ENCODE measurements at regions of chr11 and their contacts with region 1.

Region 1: DNA sequence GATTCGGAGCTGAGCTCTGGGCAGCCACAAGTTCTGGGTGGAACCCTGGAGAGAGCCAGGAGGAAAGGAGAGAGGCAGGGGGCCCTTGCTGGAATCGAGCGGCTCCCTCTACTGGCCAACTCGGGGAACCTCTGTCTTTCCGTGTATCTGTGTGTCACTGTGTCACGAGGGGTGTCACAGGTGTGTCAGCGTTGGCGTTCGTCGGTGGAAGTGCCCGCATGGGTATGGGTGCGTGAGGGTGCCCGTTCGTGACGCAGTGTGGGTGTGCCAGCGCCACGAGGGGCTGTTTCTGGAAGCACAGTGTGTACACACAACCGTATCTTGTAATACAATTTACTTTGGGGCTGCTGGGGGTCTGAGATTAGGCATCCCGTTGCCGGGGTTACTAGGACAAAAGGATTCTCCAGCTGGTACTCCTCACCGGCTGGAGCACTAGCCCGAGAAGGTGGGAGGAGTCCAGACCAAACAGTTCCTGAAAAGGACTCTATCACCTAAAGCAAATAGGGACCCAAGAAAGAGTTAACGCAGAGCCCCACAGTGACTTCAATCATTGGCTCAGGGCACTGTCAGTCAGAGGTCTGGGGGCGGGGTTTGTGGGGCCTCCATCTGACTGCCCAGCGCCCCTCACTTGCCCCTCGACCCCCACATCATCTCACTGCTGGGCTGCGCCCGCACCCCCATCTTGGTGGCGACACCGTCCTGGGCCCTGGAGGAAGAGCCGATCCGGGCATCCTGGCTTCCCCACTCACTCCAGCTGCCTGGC is 2.6 kb upstream of the BCL9L start:
- DNase-seq: peak; percentile 87
- ATAC-seq: peak; percentile 77
- H3K4me3 ChIP-seq: peak overlapping the region; percentile 71 to 89 (median 81)
- H3K27ac ChIP-seq: peak overlapping the region; percentile 50
- H3K4me1 ChIP-seq: peaks cover 58% of the 10 kb centered on the region
- H3K27me3 ChIP-seq: peaks cover 2 to 7% of the 10 kb centered on the region in 2 experiments; a peak in 3 of 5 replicates
- CTCF ChIP-seq: peak; percentile 94
- EP300 ChIP-seq: no peak
- POLR2A ChIP-seq: no peak
- RAD21 ChIP-seq: peak; percentile 88

Region 2: GRCh38 chr11:118883368-118884071 is 44.8 kb before region 1 on chr11 and contains the start of gene CXCR5:
- CTCF ChIA-PET with region 1: no interaction called
- POLR2A ChIA-PET with region 1: no interaction called
- in situ Hi-C with region 1: no loop called
- intact Hi-C with region 1: loop called (anchors 1 kb)
- DNase-seq: no peak
- ATAC-seq: no peak
- H3K4me3 ChIP-seq: no peak within 1 kb of the TSS
- H3K27ac ChIP-seq: no peak within 1 kb of the TSS
- H3K4me1 ChIP-seq: peaks cover 45% of the 10 kb centered on the region
- H3K27me3 ChIP-seq: peaks cover 3 to 44% of the 10 kb centered on the region in 2 experiments; a peak in 4 of 5 replicates
- CTCF ChIP-seq: no peak
- EP300 ChIP-seq: no peak
- POLR2A ChIP-seq: no peak
- RAD21 ChIP-seq: no peak
- total RNA-seq, gene CXCR5: not detected in 2 replicates

Region 3: GRCh38 chr11:118956094-118956846 is 28.0 kb after region 1 on chr11 and contains the start of gene UPK2:
- CTCF ChIA-PET with region 1: interaction called, 8 read pairs
- POLR2A ChIA-PET with region 1: no interaction called
- in situ Hi-C with region 1: no loop called
- intact Hi-C with region 1: loop called (anchors 1 kb)
- DNase-seq: peak; percentile 64
- ATAC-seq: peak; percentile 97
- H3K4me3 ChIP-seq: no peak within 1 kb of the TSS
- H3K27ac ChIP-seq: no peak within 1 kb of the TSS
- H3K4me1 ChIP-seq: no peaks in the 10 kb centered on the region
- H3K27me3 ChIP-seq: peaks cover 2 to 53% of the 10 kb centered on the region in 2 experiments; a peak in 4 of 5 replicates
- CTCF ChIP-seq: peak; percentile 98
- EP300 ChIP-seq: no peak
- POLR2A ChIP-seq: no peak
- RAD21 ChIP-seq: peak; percentile 97
- total RNA-seq, gene UPK2: not detected in 2 replicates